ENCODE measurements at regions of chr16 and their contacts with region 1.

Region 1: GRCh38 chr16:80824718-80825364 is 20.4 kb upstream of the CDYL2 start:
- DNase-seq: peak in 6 of 9 donors; percentile 16 to 51 (median 37)
- ATAC-seq: peak; percentile 69
- H3K4me3 ChIP-seq: no peak overlapping the region
- H3K4me3 Mint-ChIP-seq: no peak overlapping the region
- H3K27ac ChIP-seq: no peak overlapping the region
- H3K27ac Mint-ChIP-seq: no peak overlapping the region
- H3K4me1 ChIP-seq: no peaks in the 10 kb centered on the region
- H3K4me1 Mint-ChIP-seq: peaks cover 0 to 3% (median 0%) of the 10 kb centered on the region in 7 donors
- H3K27me3 ChIP-seq: no peaks in the 10 kb centered on the region
- H3K27me3 Mint-ChIP-seq: peaks cover 2 to 33% (median 5%) of the 10 kb centered on the region in 5 donors

Region 2: DNA sequence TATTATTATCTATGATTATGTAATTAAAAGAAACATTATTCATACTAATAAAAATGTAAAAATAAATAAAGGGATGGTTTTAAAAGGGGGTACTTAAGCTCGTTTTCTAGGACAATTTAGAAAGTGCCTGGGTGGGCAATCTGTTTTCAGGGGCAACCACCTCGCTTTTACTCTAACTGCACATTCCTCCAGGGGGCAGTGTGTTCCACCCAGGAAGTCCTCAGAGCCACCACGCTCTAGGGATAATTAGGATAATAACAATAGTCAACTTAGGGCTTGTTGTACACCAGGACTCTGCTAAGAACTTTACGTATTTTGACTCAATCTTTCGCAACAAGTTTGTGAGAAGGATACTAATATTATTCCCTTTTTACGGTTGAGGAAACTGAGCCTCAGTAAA is 827.6 kb before region 1 on chr16:
- CTCF ChIA-PET with region 1: no interaction called
- POLR2A ChIA-PET with region 1: no interaction called
- intact Hi-C with region 1: loop called in 1 of 2 experiments (anchors 5 kb)
- DNase-seq: no peak
- ATAC-seq: no peak
- H3K4me3 ChIP-seq: no peak overlapping the region
- H3K4me3 Mint-ChIP-seq: no peak overlapping the region
- H3K27ac ChIP-seq: no peak overlapping the region
- H3K27ac Mint-ChIP-seq: no peak overlapping the region
- H3K4me1 ChIP-seq: no peaks in the 10 kb centered on the region
- H3K4me1 Mint-ChIP-seq: no peaks in the 10 kb centered on the region
- H3K27me3 ChIP-seq: no peaks in the 10 kb centered on the region
- H3K27me3 Mint-ChIP-seq: peaks cover 0 to 8% (median 0%) of the 10 kb centered on the region in 5 donors

Region 3: DNA sequence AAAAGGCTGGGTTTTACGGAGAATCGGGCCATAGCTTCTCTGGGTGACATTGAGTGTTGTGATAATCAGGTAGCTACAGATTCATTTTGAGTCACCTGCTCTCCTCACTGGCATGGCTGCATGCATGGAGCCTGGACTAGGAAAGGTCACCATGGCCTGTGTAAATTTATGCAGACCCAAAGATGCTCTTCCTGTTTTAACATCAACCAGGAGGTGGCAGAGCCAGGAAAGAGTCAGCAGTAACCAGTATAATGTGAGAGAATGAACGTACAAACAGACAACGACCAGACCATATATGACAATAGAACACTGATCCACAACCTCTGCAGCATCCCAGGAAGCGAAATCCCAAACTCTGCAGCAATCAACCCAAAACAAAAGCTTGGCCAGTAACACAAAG is 324.3 kb before region 1 on chr16:
- CTCF ChIA-PET with region 1: interaction called, 3 read pairs
- POLR2A ChIA-PET with region 1: no interaction called
- intact Hi-C with region 1: loop called in 1 of 2 experiments (anchors 1 kb)
- DNase-seq: no peak
- ATAC-seq: no peak
- H3K4me3 ChIP-seq: no peak overlapping the region
- H3K4me3 Mint-ChIP-seq: no peak overlapping the region
- H3K27ac ChIP-seq: no peak overlapping the region
- H3K27ac Mint-ChIP-seq: no peak overlapping the region
- H3K4me1 ChIP-seq: no peaks in the 10 kb centered on the region
- H3K4me1 Mint-ChIP-seq: peaks cover 0 to 9% (median 3%) of the 10 kb centered on the region in 7 donors
- H3K27me3 ChIP-seq: no peaks in the 10 kb centered on the region
- H3K27me3 Mint-ChIP-seq: peaks cover 0 to 14% (median 0%) of the 10 kb centered on the region in 5 donors

Region 4: DNA sequence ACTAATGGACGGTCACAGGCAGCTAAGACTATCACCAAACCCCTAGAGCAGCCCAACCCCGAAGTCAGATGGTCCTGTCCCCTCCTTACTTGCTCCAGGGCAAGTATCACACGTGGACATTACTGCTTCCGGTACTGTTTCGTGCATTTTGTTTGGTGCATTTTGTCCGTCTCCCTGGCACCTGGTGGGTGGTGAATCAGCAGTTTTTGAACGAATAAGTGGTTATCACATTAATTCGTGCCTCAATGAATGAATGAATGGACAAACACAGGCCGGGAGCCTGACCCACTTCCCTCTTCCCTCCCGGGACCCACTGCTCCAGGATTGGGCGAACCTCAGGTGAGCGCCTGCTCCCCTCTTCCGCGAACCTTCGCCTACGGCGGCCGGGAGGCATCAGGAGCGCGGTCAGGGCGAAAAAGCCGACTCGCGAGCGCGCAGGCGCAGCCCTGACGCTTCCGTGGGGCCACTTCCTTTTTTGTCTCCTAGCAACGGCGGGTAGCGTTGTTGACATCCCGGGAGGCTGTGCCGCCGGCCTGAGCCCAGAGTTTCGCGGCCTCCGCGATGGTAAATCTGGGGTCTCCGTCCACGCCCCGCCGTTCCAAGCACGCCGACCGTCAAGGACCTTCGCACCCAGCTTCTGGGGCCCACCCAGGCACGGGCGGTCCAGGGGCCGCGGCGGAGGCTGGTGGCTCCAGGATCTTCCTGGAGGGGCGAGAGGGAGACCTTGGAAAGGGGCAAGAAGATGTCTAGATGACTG is 284.1 kb before region 1 on chr16 and contains the start of gene DYNLRB2:
- CTCF ChIA-PET with region 1: no interaction called
- POLR2A ChIA-PET with region 1: no interaction called
- intact Hi-C with region 1: loop called (anchors 5 kb)
- DNase-seq: peak; percentile 82 to 94 (median 93)
- ATAC-seq: peak; percentile 94
- H3K4me3 ChIP-seq: peak within 1 kb of the TSS; percentile 94
- H3K4me3 Mint-ChIP-seq: peak within 1 kb of the TSS; percentile 93 to 98 (median 96)
- H3K27ac ChIP-seq: peak within 1 kb of the TSS; percentile 77
- H3K27ac Mint-ChIP-seq: peak within 1 kb of the TSS; percentile 96 to 99 (median 97)
- H3K4me1 ChIP-seq: peaks cover 6 to 13% of the 10 kb centered on the region in 2 donors
- H3K4me1 Mint-ChIP-seq: peaks cover 16 to 33% (median 19%) of the 10 kb centered on the region in 7 donors
- H3K27me3 ChIP-seq: no peaks in the 10 kb centered on the region
- H3K27me3 Mint-ChIP-seq: peaks cover 0 to 9% (median 3%) of the 10 kb centered on the region in 5 donors
- total RNA-seq, gene DYNLRB2: 0.92 to 1.2 TPM in 2 of 5 experiments, not detected in the others

Region 5: GRCh38 chr16:80656711-80657150 is 168.1 kb before region 1 on chr16:
- CTCF ChIA-PET with region 1: no interaction called
- POLR2A ChIA-PET with region 1: no interaction called
- intact Hi-C with region 1: loop called in 1 of 2 experiments (anchors 5 kb)
- DNase-seq: peak in 8 of 9 donors; percentile 25 to 60 (median 48)
- ATAC-seq: peak; percentile 85
- H3K4me3 ChIP-seq: peak overlapping the region; percentile 56
- H3K4me3 Mint-ChIP-seq: peak overlapping the region; percentile 71 to 92 (median 87)
- H3K27ac ChIP-seq: peak overlapping the region; percentile 68
- H3K27ac Mint-ChIP-seq: peak overlapping the region; percentile 80 to 97 (median 91)
- H3K4me1 ChIP-seq: peaks cover 6 to 14% of the 10 kb centered on the region in 2 donors
- H3K4me1 Mint-ChIP-seq: peaks cover 18 to 47% (median 28%) of the 10 kb centered on the region in 7 donors
- H3K27me3 ChIP-seq: no peaks in the 10 kb centered on the region
- H3K27me3 Mint-ChIP-seq: no peaks in the 10 kb centered on the region

Measured in naive thymus-derived CD4-positive, alpha-beta T cell (primary cell).